Naive thymus-derived CD4-positive, alpha-beta T cell (primary cell): ENCODE measurements at regions of chr7 and their contacts with region 1.

Region 1: DNA sequence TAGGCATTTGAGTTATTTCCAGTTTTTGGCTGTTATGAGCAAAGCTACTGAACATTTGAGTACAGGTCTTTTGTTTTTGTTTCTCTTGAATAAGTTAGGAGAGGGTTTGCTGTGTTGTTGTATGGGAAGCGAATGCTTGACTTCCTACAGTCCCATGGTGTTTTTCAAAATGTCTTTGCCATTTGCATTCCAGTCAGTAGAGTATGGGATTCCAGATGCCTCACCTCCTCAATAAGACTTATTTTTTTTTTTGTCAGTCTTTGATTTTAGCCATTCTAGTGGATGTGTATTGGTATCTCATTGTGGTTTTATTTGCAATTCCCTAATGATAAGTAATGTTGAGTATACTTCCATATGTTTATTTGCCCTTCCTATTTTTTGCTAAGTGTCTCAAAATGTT is 19.4 kb downstream of the CDK13 start:
- DNase-seq: no peak
- ATAC-seq: no peak
- H3K4me3 ChIP-seq: no peak overlapping the region
- H3K4me3 Mint-ChIP-seq: peak overlapping the region in 9 of 10 donors; percentile 0 to 73 (median 58)
- H3K27ac ChIP-seq: no peak overlapping the region
- H3K27ac Mint-ChIP-seq: peak overlapping the region in 8 of 9 donors; percentile 9 to 79 (median 66)
- H3K4me1 ChIP-seq: peaks cover 13 to 42% of the 10 kb centered on the region in 2 donors
- H3K4me1 Mint-ChIP-seq: peaks cover 55 to 97% (median 94%) of the 10 kb centered on the region in 7 donors
- H3K27me3 ChIP-seq: no peaks in the 10 kb centered on the region
- H3K27me3 Mint-ChIP-seq: no peaks in the 10 kb centered on the region

Region 2: DNA sequence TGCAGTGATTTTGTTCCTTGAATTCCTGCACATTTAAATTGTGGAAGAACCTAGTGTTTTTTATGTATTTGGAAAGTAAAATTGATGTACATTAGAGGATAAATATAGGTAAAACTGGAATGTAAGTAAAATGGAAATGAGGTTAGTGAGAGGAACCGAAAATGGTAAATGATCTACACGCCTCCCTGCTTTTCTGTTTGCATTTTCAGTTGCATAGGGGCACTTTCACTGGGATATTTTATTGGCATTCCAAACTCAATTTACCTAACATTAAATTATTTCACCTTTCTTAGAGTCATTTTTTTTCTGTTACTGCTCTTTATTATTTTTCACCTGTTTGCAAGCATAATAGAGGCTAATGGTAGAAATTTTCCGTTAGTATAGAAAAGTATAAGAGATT is 11.4 kb before region 1 on chr7:
- CTCF ChIA-PET with region 1: interaction called, 3 read pairs
- POLR2A ChIA-PET with region 1: no interaction called
- intact Hi-C with region 1: loop called in 1 of 2 experiments (anchors 1 kb)
- DNase-seq: no peak
- ATAC-seq: no peak
- H3K4me3 ChIP-seq: no peak overlapping the region
- H3K4me3 Mint-ChIP-seq: peak overlapping the region in 9 of 10 donors; percentile 20 to 99 (median 55)
- H3K27ac ChIP-seq: no peak overlapping the region
- H3K27ac Mint-ChIP-seq: peak overlapping the region in 1 of 9 donors; percentile 47
- H3K4me1 ChIP-seq: peaks cover 20 to 38% of the 10 kb centered on the region in 2 donors
- H3K4me1 Mint-ChIP-seq: peaks cover 54 to 88% (median 81%) of the 10 kb centered on the region in 7 donors
- H3K27me3 ChIP-seq: no peaks in the 10 kb centered on the region
- H3K27me3 Mint-ChIP-seq: no peaks in the 10 kb centered on the region

Region 3: DNA sequence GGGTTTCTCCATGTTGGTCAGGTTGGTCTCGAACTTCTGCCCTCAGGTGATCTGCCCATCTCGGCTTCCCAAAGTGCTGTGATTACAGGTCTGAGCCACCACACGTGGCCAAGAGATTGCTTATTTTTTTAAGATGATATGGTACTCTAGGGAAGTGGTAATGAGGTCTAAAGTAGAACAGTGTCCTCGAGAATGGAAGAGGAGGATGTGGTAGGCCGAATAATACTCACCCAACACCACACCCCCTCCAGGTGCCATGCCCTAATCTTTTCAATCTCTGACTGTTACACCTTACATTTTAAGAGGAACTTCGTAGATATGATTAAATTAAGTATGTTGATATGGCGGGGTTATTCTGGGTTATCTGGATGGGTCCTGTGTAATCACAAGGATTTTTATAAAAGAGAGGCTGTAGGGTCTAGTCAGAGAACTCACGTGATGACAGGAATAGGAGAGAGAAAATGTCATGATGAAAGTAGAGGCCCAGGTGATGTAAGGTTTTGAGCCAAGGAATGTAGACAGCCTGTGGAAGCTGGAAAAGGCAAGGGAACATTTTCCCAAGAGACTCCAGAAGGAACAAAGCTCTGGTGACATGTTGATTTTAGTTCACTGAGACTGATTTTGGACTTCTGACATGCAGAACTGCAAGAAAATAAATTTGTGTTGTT is 10.1 kb after region 1 on chr7:
- CTCF ChIA-PET with region 1: interaction called, 3 read pairs
- POLR2A ChIA-PET with region 1: no interaction called
- intact Hi-C with region 1: loop called in 1 of 2 experiments (anchors 1 kb)
- DNase-seq: peak in 7 of 9 donors; percentile 18 to 54 (median 39)
- ATAC-seq: peak; percentile 81
- H3K4me3 ChIP-seq: no peak overlapping the region
- H3K4me3 Mint-ChIP-seq: no peak overlapping the region
- H3K27ac ChIP-seq: peak overlapping the region; percentile 35
- H3K27ac Mint-ChIP-seq: no peak overlapping the region
- H3K4me1 ChIP-seq: peaks cover 32 to 40% of the 10 kb centered on the region in 2 donors
- H3K4me1 Mint-ChIP-seq: peaks cover 5 to 21% (median 20%) of the 10 kb centered on the region in 7 donors
- H3K27me3 ChIP-seq: no peaks in the 10 kb centered on the region
- H3K27me3 Mint-ChIP-seq: no peaks in the 10 kb centered on the region

Region 4: DNA sequence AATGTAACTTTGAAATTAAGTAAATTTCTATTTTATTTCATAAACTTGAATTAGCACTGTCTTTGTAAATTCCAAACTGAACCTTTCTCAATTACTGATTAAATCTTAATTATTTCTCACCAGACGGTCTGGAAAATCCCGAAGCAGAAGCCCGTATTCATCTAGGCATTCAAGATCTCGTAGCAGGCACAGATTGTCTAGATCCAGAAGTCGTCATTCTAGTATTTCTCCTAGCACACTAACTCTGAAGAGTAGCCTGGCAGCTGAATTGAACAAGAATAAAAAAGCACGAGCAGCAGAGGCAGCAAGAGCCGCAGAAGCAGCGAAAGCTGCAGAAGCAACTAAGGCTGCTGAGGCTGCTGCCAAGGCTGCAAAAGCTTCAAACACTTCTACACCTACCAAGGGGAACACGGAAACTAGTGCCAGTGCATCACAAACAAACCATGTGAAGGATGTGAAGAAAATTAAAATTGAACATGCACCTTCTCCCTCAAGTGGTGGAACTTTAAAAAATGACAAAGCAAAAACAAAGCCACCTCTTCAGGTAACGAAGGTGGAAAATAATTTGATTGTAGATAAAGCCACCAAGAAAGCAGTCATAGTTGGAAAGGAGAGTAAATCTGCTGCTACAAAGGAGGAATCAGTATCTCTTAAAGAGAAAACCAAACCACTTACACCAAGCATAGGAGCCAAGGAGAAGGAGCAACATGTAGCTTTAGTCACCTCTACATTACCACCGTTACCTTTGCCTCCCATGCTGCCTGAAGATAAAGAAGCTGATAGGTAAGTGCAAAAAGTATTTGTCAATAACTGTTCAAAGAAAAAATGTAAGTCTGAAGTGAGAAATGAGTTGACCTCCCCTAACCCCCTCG is 18.3 kb after region 1 on chr7:
- CTCF ChIA-PET with region 1: interaction called, 3 read pairs
- POLR2A ChIA-PET with region 1: no interaction called
- intact Hi-C with region 1: loop called in 1 of 2 experiments (anchors 2 kb)
- DNase-seq: peak in 7 of 9 donors; percentile 62 to 83 (median 76)
- ATAC-seq: peak; percentile 86
- H3K4me3 ChIP-seq: no peak overlapping the region
- H3K4me3 Mint-ChIP-seq: peak overlapping the region in 9 of 10 donors; percentile 19 to 68 (median 49)
- H3K27ac ChIP-seq: peak overlapping the region; percentile 46
- H3K27ac Mint-ChIP-seq: peak overlapping the region; percentile 15 to 93 (median 84)
- H3K4me1 ChIP-seq: peaks cover 4 to 28% of the 10 kb centered on the region in 2 donors
- H3K4me1 Mint-ChIP-seq: peaks cover 33 to 75% (median 56%) of the 10 kb centered on the region in 7 donors
- H3K27me3 ChIP-seq: no peaks in the 10 kb centered on the region
- H3K27me3 Mint-ChIP-seq: no peaks in the 10 kb centered on the region

Region 5: DNA sequence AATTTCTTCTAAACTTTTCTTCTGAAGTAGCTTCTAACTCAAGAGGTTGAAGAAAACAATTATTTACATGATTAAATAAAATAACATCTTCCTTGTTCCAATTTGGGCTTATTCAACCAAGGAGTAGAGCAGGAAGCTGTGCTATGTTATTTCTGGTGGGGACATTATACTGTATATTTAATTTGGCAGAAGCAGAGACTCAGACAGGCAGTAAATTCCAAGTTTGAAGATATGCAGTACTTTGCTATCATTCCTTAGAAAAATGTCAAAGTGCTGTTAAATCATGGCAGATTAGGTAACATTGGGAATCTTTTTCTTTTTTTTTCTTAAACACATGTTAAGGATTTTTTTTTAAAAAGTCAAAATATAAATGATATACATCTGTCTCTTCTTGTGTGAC is 355.5 kb after region 1 on chr7:
- CTCF ChIA-PET with region 1: no interaction called
- POLR2A ChIA-PET with region 1: no interaction called
- intact Hi-C with region 1: no loop called
- DNase-seq: no peak
- ATAC-seq: no peak
- H3K4me3 ChIP-seq: no peak overlapping the region
- H3K4me3 Mint-ChIP-seq: no peak overlapping the region
- H3K27ac ChIP-seq: no peak overlapping the region
- H3K27ac Mint-ChIP-seq: no peak overlapping the region
- H3K4me1 ChIP-seq: no peaks in the 10 kb centered on the region
- H3K4me1 Mint-ChIP-seq: no peaks in the 10 kb centered on the region
- H3K27me3 ChIP-seq: no peaks in the 10 kb centered on the region
- H3K27me3 Mint-ChIP-seq: no peaks in the 10 kb centered on the region